PC-9 (cell line): ENCODE measurements at regions of chr6 and their contacts with region 1.

Region 1: DNA sequence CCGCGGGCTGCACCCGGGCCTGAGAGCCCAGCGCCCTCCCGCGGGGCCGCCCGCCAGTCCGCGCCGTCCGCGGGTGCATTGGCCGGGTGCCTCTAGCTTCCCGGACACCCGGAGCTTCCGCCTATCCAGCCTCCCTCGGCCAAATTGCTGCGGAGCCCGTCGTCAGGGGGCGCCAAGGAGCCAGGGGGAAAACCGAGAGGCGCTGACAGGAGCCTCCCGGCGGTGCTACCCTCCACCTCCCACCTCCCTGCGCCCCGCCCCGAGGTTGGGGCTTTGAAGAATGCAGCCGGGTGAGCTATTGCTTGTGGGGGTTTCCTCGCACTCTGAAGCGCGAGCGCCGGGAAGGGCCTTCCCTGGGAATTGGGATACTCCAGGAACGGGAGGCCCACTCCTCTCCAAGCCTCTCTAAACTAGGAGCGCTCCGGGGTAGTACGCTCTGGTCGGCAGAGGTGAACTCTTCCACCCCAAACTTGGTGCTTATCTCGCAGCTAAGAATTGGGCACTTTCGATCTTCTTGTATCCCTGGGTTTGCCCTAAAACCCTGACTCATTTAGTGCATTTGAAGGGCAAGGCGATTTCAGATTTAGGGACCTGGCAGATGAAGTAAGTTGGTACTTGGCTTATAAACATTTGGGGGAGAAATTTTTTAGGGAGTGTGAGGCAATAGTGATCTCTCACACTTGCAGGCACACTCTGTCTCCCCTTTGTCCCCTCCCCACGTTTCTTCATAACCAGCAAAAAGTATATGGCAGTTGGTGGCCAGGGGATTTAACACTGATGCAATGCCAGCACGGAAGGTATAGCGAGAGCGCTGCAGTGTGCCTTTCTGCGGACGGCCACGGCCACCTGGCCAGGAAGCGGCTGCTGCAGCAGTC is 501 bp downstream of the BEND6 start:
- DNase-seq: peak; percentile 89 to 97
- H3K4me3 ChIP-seq: peak overlapping the region; percentile 93
- H3K27ac ChIP-seq: peak overlapping the region; percentile 93
- H3K4me1 ChIP-seq: peaks cover 51% of the 10 kb centered on the region
- H3K27me3 ChIP-seq: no peaks in the 10 kb centered on the region
- CTCF ChIP-seq: peak; percentile 78

Region 2: DNA sequence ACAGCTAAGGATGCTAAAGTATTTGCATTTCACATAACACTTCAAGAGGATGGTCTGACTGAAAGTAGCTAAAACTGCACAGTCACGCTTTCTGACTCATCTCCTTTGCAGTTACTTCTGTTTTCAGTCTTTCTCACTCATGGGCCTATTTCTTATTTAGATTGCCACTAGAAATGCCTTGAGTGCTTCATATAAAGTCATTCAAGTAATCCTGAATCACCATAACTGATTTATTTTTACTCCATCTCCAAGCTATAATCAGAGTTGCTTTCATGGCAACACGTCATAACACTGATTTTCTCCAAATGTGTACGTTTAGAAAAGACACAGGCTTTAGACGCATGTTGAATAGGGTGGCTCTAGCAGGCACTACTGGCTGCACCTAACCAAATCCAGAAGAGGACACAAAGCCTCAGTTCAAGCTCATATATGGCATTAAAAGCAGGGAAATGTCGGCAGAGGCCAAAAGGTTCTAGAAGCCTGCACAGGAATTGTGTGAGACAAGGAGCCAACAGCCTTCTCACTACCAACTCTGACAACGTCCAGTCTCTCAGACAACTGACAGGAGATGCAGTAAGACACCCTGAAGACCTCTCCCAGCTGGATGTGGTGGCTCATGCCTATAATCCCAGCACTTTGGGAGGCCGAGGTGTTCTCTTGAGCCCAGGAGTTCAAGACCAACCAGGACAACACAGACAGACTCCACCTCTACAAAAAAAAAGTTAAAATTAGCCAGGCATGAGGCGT is 64.6 kb before region 1 on chr6:
- CTCF ChIA-PET with region 1: no interaction called
- POLR2A ChIA-PET with region 1: interaction called, 12 read pairs
- intact Hi-C with region 1: no loop called
- DNase-seq: peak in 1 of 2 experiments; percentile 61
- H3K4me3 ChIP-seq: no peak overlapping the region
- H3K27ac ChIP-seq: peak overlapping the region; percentile 92
- H3K4me1 ChIP-seq: peaks cover 24% of the 10 kb centered on the region
- H3K27me3 ChIP-seq: no peaks in the 10 kb centered on the region
- CTCF ChIP-seq: no peak

Region 3: GRCh38 chr6:56911847-56912246 is 43.6 kb before region 1 on chr6:
- CTCF ChIA-PET with region 1: no interaction called
- POLR2A ChIA-PET with region 1: no interaction called
- intact Hi-C with region 1: loop called (anchors 2 kb)
- DNase-seq: peak; percentile 14 to 68
- H3K4me3 ChIP-seq: no peak overlapping the region
- H3K27ac ChIP-seq: peak overlapping the region; percentile 17; the same call in 1 of the 2 replicates
- H3K4me1 ChIP-seq: peaks cover 20% of the 10 kb centered on the region
- H3K27me3 ChIP-seq: no peaks in the 10 kb centered on the region
- CTCF ChIP-seq: no peak

Region 4: DNA sequence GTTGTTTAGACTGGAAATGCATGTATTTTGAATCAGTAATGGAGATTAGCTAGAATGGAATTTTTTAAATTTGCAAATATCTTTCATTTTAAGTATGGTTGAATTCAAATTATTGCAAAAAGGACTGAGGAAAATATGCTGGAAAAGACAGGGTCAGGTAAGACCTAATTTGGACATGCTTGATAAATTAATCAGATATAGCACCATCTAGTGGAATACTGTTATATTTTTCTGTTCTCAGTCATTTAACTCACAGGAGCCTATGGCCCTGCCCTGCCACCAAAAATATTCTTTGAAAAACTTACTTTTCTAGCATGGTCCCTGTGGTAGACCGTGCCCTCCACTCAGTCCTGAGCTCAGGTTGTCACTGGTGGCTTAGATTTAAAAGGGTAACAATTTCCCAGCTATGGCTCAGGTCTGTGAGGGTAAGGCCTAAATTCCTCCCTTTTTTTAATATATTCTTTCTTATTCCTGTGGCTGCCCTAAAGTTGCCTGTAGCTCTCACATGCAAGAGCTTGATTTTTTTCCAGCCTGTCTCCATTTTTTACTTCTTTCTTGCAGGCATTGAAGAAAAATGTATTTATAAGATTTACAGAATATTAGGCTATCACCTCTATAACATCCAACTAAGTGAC is 65.8 kb after region 1 on chr6:
- CTCF ChIA-PET with region 1: interaction called, 3 read pairs
- POLR2A ChIA-PET with region 1: no interaction called
- intact Hi-C with region 1: loop called (anchors 5 kb)
- DNase-seq: peak in 1 of 2 experiments; percentile 64
- H3K4me3 ChIP-seq: no peak overlapping the region
- H3K27ac ChIP-seq: no peak overlapping the region
- H3K4me1 ChIP-seq: no peaks in the 10 kb centered on the region
- H3K27me3 ChIP-seq: no peaks in the 10 kb centered on the region
- CTCF ChIP-seq: peak; percentile 72

Region 5: DNA sequence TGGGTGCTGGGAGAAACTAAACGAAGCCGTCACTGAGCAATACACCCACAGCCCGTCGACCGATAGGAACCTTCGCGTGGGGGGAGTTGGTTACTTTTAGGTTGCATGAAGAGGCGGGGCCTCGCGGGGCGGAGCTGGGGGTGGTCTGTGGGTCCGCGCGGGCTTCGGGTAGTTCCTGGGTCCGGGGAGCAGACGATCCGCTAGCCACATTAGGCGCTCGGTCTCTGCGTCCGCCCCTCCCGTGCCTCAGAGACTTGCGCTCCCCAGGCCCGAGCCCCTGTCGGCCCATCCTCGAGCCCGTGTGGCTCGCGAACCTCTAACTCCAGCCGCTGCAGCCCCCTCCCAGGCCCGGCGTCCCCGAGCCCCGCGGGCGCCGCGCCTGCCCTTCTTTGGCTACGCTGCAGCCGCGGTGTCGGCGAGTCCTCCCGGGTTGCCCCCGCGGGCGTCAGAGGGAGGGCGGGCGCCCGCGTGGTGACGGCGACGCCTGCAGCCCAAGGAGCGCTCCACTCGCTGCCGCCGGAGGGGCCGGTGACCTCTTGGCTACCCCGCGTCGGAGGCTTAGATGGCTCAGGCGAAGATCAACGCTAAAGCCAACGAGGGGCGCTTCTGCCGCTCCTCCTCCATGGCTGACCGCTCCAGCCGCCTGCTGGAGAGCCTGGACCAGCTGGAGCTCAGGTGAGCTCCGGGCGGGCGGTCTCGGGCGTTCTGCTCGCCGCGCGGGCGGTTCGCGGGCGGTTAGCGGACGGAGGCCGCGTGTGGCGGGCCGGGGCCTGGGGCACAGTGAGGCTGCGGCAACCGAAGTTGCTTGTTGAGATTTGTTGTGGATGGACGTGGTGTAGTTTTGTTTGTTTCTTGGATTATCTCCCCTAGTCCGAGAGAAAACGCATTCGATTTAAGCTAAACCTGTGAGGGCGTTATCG is 217.0 kb after region 1 on chr6 and contains the start of gene BAG2:
- CTCF ChIA-PET with region 1: interaction called, 4 read pairs
- POLR2A ChIA-PET with region 1: no interaction called
- intact Hi-C with region 1: loop called (anchors 2 kb)
- DNase-seq: peak; percentile 73 to 85
- H3K4me3 ChIP-seq: peak within 1 kb of the TSS; percentile 91
- H3K27ac ChIP-seq: peak within 1 kb of the TSS; percentile 87
- H3K4me1 ChIP-seq: peaks cover 30% of the 10 kb centered on the region
- H3K27me3 ChIP-seq: no peaks in the 10 kb centered on the region
- CTCF ChIP-seq: no peak; the same call in 1 of the 2 replicates
- total RNA-seq, gene BAG2: 9.0 and 11.0 TPM in 2 replicates